Right lobe of liver (tissue), 6 donors: ENCODE measurements at regions of chr17 and their contacts with region 1.

Region 1: GRCh38 chr17:50944054-50944901 is 78.1 kb upstream of the TOB1 start:
- DNase-seq: peak; percentile 94 to 98 (median 98)
- ATAC-seq: peak; percentile 72 to 86 (median 77)
- H3K4me3 ChIP-seq: peak overlapping the region; percentile 46 to 76 (median 50)
- H3K27ac ChIP-seq: peak overlapping the region; percentile 86 to 99 (median 90)
- H3K4me1 ChIP-seq: peaks cover 0 to 69% (median 39%) of the 10 kb centered on the region in 4 donors
- H3K27me3 ChIP-seq: no peaks in the 10 kb centered on the region
- CTCF ChIP-seq: no peak
- POLR2A ChIP-seq: peak; percentile 99

Region 2: DNA sequence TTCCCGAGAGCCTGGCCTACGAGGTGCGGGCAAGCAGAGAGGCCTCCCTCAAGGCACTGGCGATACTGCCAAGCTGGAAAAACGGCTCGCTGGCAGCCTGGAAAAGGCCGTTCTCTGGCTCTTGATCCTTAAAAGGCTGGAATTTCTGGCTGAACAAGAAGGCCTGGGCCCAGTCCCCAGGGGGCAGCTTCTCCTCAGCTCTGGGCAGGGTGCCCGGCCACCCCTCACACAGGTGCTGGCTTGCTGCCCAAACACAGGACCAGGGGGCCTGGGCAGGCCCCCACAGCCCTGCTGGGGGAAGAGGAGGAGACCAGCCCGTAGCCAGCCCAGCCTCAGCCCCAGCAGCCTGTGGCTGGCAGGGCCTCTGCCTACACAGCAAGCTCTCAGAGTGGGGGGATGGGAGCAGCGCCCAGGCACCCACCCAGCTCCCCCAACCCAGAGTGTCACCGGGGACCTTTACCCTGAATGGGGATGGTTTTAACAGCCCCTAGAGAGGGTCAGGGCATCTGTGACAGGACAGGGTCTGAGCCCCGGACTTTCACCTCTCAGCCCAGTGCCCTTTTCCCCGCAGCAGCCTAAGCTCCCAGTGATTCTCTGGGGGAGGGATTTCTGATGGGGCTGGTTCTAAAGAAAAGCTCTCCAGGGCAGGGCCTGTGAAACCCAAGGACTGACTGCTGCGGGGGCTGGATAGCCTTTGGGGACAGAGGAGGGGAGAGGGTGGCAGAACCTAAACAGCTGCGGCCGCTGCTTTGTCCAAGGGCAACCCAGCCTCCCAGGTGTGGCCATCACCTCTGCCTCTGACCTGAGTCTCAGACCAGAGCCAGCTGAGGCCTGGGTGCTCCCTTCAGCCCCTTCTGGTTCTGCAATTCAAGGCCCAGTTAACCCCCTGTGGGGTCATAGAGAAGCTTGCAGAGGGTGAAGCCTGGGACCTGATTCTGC is 39.5 kb before region 1 on chr17:
- intact Hi-C with region 1: loop called in 1 of 2 experiments (anchors 5 kb)
- DNase-seq: peak; percentile 63 to 93 (median 91)
- ATAC-seq: peak; percentile 65 to 80 (median 72)
- H3K4me3 ChIP-seq: peak overlapping the region in 2 of 3 donors; percentile 31 to 33
- H3K27ac ChIP-seq: peak overlapping the region; percentile 85 to 100 (median 99)
- H3K4me1 ChIP-seq: peaks cover 0 to 61% (median 28%) of the 10 kb centered on the region in 4 donors
- H3K27me3 ChIP-seq: no peaks in the 10 kb centered on the region
- CTCF ChIP-seq: no peak
- POLR2A ChIP-seq: peak; percentile 69